T-cell (primary cell): ENCODE measurements at regions of chr2 and their contacts with region 1.

Region 1: DNA sequence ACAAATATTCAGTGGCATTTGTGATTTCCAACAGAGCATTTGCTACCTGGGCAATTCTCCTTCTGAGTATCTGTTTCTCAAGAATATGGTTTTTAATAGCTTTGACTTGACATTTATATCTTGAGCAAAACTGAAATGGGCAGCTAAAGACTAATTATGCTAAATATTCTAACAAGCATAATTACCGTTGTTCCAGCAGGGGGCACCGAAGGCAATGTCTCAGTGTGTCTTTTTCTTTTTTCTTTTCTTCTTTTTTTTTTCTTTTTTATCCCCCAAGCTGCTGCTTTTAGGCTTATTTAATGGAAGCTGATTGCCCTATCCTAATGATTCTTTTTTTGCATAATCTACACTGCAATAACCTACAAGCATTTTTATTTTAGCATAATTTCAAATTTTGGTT is 138.9 kb upstream of the NABP1 start:
- DNase-seq: peak in 17 of 35 experiments; percentile 3 to 42 (median 13)
- ATAC-seq: no peak
- H3K4me3 ChIP-seq: no peak overlapping the region
- H3K4me3 Mint-ChIP-seq: no peak overlapping the region
- H3K27ac ChIP-seq: no peak overlapping the region
- H3K27ac Mint-ChIP-seq: no peak overlapping the region
- H3K4me1 ChIP-seq: no peaks in the 10 kb centered on the region
- H3K4me1 Mint-ChIP-seq: peaks cover 0 to 1% (median 0%) of the 10 kb centered on the region in 3 donors
- H3K27me3 ChIP-seq: peaks cover 0 to 3% of the 10 kb centered on the region in 2 experiments
- H3K27me3 Mint-ChIP-seq: peaks cover 0 to 7% of the 10 kb centered on the region in 2 donors

Region 2: GRCh38 chr2:189751080-189751658 is 1787.9 kb before region 1 on chr2:
- CTCF ChIA-PET with region 1: no interaction called
- POLR2A ChIA-PET with region 1: interaction called in 1 of 2 experiments, 10 read pairs
- DNase-seq: peak in 25 of 35 experiments; percentile 4 to 66 (median 28)
- ATAC-seq: peak; percentile 60 to 85 (median 66)
- H3K4me3 ChIP-seq: no peak overlapping the region
- H3K4me3 Mint-ChIP-seq: no peak overlapping the region
- H3K27ac ChIP-seq: no peak overlapping the region
- H3K27ac Mint-ChIP-seq: no peak overlapping the region
- H3K4me1 ChIP-seq: no peaks in the 10 kb centered on the region
- H3K4me1 Mint-ChIP-seq: peaks cover 0 to 3% (median 1%) of the 10 kb centered on the region in 3 donors
- H3K27me3 ChIP-seq: no peaks in the 10 kb centered on the region
- H3K27me3 Mint-ChIP-seq: no peaks in the 10 kb centered on the region

Region 3: DNA sequence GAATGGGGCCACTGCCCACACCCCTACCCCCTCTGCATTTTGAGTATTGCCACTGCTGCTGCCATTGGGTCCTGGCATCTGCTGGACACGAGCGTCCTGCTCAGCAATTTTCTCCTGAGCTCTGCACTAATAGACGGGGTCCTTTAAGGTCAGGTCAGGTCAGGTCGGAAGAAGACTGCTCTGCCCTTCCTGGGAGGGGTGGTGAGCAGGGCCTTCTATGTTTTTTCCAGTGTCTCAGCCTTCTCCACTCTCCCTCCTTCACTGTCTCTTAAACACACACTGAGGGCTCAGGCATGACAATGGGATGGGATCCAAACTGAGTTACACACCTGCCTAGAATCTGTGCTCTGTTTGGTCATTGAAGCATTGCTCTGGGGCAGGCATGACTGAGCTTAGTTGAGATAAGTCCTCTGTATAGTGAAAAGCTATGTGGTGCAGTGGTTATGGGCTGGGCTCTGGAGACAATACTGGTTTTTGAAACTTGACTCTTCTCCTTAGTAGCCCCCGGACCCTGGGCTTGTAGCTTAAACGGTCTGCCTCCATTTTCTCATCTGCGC is 283.2 kb before region 1 on chr2:
- CTCF ChIA-PET with region 1: no interaction called
- POLR2A ChIA-PET with region 1: no interaction called
- DNase-seq: no peak
- ATAC-seq: no peak
- H3K4me3 ChIP-seq: no peak overlapping the region
- H3K4me3 Mint-ChIP-seq: no peak overlapping the region
- H3K27ac ChIP-seq: no peak overlapping the region
- H3K27ac Mint-ChIP-seq: no peak overlapping the region
- H3K4me1 ChIP-seq: no peaks in the 10 kb centered on the region
- H3K4me1 Mint-ChIP-seq: no peaks in the 10 kb centered on the region
- H3K27me3 ChIP-seq: no peaks in the 10 kb centered on the region
- H3K27me3 Mint-ChIP-seq: peaks cover 0 to 3% of the 10 kb centered on the region in 2 donors

Region 4: GRCh38 chr2:191521608-191522208 is 17.4 kb before region 1 on chr2:
- CTCF ChIA-PET with region 1: interaction called in 1 of 2 experiments, 3 read pairs
- POLR2A ChIA-PET with region 1: interaction called in 1 of 2 experiments, 10 read pairs
- DNase-seq: peak in 1 of 35 experiments; percentile 47
- ATAC-seq: no peak
- H3K4me3 ChIP-seq: no peak overlapping the region
- H3K4me3 Mint-ChIP-seq: no peak overlapping the region
- H3K27ac ChIP-seq: no peak overlapping the region
- H3K27ac Mint-ChIP-seq: no peak overlapping the region
- H3K4me1 ChIP-seq: no peaks in the 10 kb centered on the region
- H3K4me1 Mint-ChIP-seq: no peaks in the 10 kb centered on the region
- H3K27me3 ChIP-seq: no peaks in the 10 kb centered on the region
- H3K27me3 Mint-ChIP-seq: peaks cover 5 to 9% of the 10 kb centered on the region in 2 donors